H1 (cell line): ENCODE measurements at regions of chr1 and their contacts with region 1.

Region 1: GRCh38 chr1:168603501-168604110 is 27.2 kb downstream of the XCL1 start:
- DNase-seq: peak; percentile 50 to 82
- H3K4me3 ChIP-seq: no peak overlapping the region
- H3K27ac ChIP-seq: no peak overlapping the region
- H3K4me1 ChIP-seq: no peaks in the 10 kb centered on the region
- H3K27me3 ChIP-seq: peaks cover 0 to 1% (median 0%) of the 10 kb centered on the region in 4 experiments; a peak in 1 of 7 replicates
- CTCF ChIP-seq: peak; percentile 82 to 90 (median 88)
- EP300 ChIP-seq: no peak
- POLR2A ChIP-seq: no peak
- RAD21 ChIP-seq: peak; percentile 99

Region 2: DNA sequence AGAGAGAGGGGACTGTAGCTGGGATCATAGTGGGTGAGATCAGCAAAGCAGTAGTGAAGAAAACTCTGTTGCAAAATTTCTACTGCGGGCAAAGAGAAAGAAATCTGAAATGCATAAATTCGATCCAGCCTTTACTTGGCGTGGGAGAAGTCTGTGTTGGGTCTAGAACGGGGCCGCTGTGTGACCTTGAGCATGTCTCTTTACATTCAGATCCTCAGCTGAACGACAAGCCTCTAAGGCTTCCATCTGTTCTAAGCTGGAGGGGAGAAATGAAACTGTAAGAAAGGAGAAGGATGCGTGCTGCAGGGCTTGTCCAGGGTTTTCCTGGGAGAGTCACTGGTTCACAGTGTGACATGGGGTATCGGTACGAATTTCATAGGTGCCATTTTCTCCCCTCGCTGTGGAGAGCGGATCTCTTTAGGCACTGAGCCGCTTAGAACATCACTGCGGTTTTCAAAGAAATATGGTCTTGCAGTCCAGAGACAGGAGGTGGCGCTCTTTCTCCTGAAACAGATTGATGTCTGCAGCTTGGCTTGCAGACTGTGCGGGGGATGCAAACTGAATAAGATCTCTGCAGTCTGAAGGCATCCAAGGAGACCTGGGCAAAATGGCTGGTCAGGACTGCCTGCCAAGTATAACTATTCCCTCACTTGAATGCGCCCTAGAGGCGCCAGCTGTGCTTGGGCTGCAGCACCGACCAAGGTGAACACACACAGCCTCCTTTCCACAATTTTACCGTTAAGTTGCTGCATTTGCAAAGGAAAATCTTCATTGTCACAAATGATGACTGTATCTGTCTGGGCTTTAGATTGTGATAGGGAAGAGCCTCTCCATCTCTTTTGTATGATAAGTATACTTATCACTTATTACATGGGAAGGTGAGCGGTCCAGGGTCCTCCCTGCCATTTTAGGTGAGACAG is 163.9 kb before region 1 on chr1:
- CTCF ChIA-PET with region 1: interaction called, 22 read pairs
- POLR2A ChIA-PET with region 1: no interaction called
- DNase-seq: peak; percentile 61 to 82
- H3K4me3 ChIP-seq: 0 out of 8 replicates have a peak overlapping the region, but pooled peaks of 1 of the 4 experiments have one; percentile 13
- H3K27ac ChIP-seq: no peak overlapping the region
- H3K4me1 ChIP-seq: 0 out of 7 replicates have a peak, but pooled peaks cover 0 to 2% (median 0%) of the 10 kb centered on the region in 4 experiments
- H3K27me3 ChIP-seq: no peaks in the 10 kb centered on the region
- CTCF ChIP-seq: peak; percentile 58 to 94 (median 87)
- EP300 ChIP-seq: no peak
- POLR2A ChIP-seq: no peak
- RAD21 ChIP-seq: peak; percentile 96 to 98

Region 3: GRCh38 chr1:168617974-168618750 is 14.6 kb after region 1 on chr1:
- CTCF ChIA-PET with region 1: interaction called, 22 read pairs
- POLR2A ChIA-PET with region 1: no interaction called
- DNase-seq: no peak
- H3K4me3 ChIP-seq: no peak overlapping the region
- H3K27ac ChIP-seq: no peak overlapping the region
- H3K4me1 ChIP-seq: no peaks in the 10 kb centered on the region
- H3K27me3 ChIP-seq: no peaks in the 10 kb centered on the region
- CTCF ChIP-seq: no peak
- EP300 ChIP-seq: no peak
- POLR2A ChIP-seq: no peak
- RAD21 ChIP-seq: no peak

Region 4: GRCh38 chr1:168623003-168623828 is 19.6 kb after region 1 on chr1:
- CTCF ChIA-PET with region 1: interaction called, 18 read pairs
- POLR2A ChIA-PET with region 1: no interaction called
- DNase-seq: no peak
- H3K4me3 ChIP-seq: no peak overlapping the region
- H3K27ac ChIP-seq: no peak overlapping the region
- H3K4me1 ChIP-seq: no peaks in the 10 kb centered on the region
- H3K27me3 ChIP-seq: no peaks in the 10 kb centered on the region; a peak in 1 of 7 replicates
- CTCF ChIP-seq: no peak
- EP300 ChIP-seq: no peak
- POLR2A ChIP-seq: no peak
- RAD21 ChIP-seq: no peak

Region 5: DNA sequence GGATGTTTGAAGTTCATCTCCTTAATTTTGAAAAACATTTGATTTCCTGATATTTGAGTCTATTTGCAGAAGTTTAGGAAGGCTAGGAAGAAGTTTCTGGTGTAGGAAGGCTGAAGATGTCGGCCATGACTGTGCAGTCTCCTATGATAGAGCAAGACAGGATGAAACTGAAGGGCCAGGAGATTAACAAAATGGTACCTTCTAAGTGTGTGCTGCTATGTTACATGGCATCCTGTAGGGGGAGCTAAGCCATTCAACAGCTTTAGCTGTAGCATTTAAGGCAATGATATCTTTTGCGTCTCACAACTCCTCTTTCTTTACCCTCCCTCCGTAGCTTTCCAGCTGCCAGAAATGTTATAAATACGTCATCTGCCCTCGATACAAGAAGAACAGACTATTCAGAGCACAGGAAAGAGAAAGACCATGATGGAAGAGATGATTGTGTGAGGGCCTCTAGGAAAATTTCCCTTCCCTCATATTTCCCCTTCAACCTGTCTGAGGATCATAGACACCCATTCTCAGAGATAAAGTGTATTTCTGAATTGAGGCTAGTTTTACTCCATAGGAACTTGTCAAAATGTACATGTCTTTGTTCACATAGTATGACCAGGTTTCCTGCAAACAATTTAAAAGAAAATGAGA is 33.9 kb after region 1 on chr1:
- CTCF ChIA-PET with region 1: interaction called, 18 read pairs
- POLR2A ChIA-PET with region 1: no interaction called
- DNase-seq: no peak
- H3K4me3 ChIP-seq: no peak overlapping the region
- H3K27ac ChIP-seq: no peak overlapping the region
- H3K4me1 ChIP-seq: no peaks in the 10 kb centered on the region
- H3K27me3 ChIP-seq: no peaks in the 10 kb centered on the region
- CTCF ChIP-seq: peak in 2 of 3 experiments; percentile 60 to 94; a peak in 3 of 4 replicates
- EP300 ChIP-seq: no peak
- POLR2A ChIP-seq: no peak
- RAD21 ChIP-seq: peak; percentile 75 to 80

Region 6: GRCh38 chr1:168706391-168706992 is 102.9 kb after region 1 on chr1:
- CTCF ChIA-PET with region 1: interaction called, 12 read pairs
- POLR2A ChIA-PET with region 1: no interaction called
- DNase-seq: no peak
- H3K4me3 ChIP-seq: no peak overlapping the region
- H3K27ac ChIP-seq: no peak overlapping the region
- H3K4me1 ChIP-seq: no peaks in the 10 kb centered on the region
- H3K27me3 ChIP-seq: no peaks in the 10 kb centered on the region
- CTCF ChIP-seq: no peak
- EP300 ChIP-seq: no peak
- POLR2A ChIP-seq: no peak
- RAD21 ChIP-seq: no peak

Region 7: GRCh38 chr1:169348383-169349036 is 744.9 kb after region 1 on chr1:
- CTCF ChIA-PET with region 1: interaction called, 36 read pairs
- POLR2A ChIA-PET with region 1: no interaction called
- DNase-seq: no peak
- H3K4me3 ChIP-seq: no peak overlapping the region
- H3K27ac ChIP-seq: no peak overlapping the region
- H3K4me1 ChIP-seq: no peaks in the 10 kb centered on the region
- H3K27me3 ChIP-seq: no peaks in the 10 kb centered on the region
- CTCF ChIP-seq: peak in 2 of 3 experiments; percentile 39 to 59; a peak in 2 of 4 replicates
- EP300 ChIP-seq: no peak
- POLR2A ChIP-seq: no peak
- RAD21 ChIP-seq: peak; percentile 86